Heart right ventricle (tissue), 16 donors: ENCODE measurements at regions of chr5 and their contacts with region 1.

Region 1: GRCh38 chr5:124706729-124707361 is 39.6 kb downstream of the ZNF608 start:
- DNase-seq: peak; percentile 27 to 68
- ATAC-seq: peak; percentile 64 to 79 (median 72)
- H3K4me3 ChIP-seq: peak overlapping the region in 5 of 10 donors; percentile 12 to 28 (median 21)
- H3K27ac ChIP-seq: peak overlapping the region in 7 of 10 donors; percentile 2 to 62 (median 15)
- H3K4me1 ChIP-seq: peaks cover 5 to 88% (median 57%) of the 10 kb centered on the region in 9 donors
- H3K27me3 ChIP-seq: no peaks in the 10 kb centered on the region
- CTCF ChIP-seq: no peak

Region 2: DNA sequence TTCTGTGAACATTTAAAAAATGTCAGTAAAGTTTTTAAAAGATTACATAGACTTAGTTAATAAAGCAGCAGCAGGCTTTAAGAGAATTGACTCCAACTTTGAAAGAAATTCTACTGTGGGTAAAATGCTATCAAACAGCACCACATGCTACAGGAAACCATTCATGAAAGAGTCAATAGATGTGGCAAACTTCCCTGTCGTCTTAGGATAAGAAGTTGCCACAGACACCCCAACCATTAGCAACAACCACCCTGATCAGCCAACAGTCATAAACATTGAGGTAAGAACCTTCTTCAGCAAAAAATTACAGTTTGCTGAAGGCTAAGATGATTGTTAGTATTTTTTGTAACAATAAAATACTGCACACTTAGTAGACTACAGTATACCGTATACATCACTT is 916.6 kb before region 1 on chr5:
- intact Hi-C with region 1: loop called in 1 of 10 experiments (anchors 5 kb)
- DNase-seq: no peak
- ATAC-seq: no peak
- H3K4me3 ChIP-seq: no peak overlapping the region
- H3K27ac ChIP-seq: no peak overlapping the region
- H3K4me1 ChIP-seq: peaks cover 0 to 16% (median 0%) of the 10 kb centered on the region in 9 donors
- H3K27me3 ChIP-seq: no peaks in the 10 kb centered on the region
- CTCF ChIP-seq: no peak

Region 3: DNA sequence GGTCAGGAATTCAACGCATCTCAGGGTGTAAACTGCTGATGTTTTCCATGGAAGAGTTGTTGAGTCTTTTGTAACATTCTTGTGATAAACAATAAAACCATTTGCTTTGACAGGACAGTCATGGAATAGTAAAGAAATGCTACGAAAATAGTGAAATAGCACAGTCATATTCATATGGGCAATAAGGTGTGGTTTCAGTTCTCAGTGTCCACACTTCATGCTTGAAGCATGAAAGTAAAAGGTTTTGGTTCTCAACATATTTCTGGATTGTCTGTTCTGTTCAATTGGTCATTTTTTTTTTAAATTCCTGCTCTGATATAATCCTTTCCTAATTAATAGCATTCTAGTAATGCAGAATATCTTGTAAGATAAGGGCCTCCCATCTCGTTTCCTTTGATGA is 507.2 kb after region 1 on chr5:
- intact Hi-C with region 1: no loop called
- DNase-seq: no peak
- ATAC-seq: no peak
- H3K4me3 ChIP-seq: no peak overlapping the region
- H3K27ac ChIP-seq: no peak overlapping the region
- H3K4me1 ChIP-seq: peaks cover 0 to 6% (median 0%) of the 10 kb centered on the region in 9 donors
- H3K27me3 ChIP-seq: no peaks in the 10 kb centered on the region
- CTCF ChIP-seq: no peak